H1 (cell line): ENCODE measurements at regions of chr11 and their contacts with region 1.

Region 1: DNA sequence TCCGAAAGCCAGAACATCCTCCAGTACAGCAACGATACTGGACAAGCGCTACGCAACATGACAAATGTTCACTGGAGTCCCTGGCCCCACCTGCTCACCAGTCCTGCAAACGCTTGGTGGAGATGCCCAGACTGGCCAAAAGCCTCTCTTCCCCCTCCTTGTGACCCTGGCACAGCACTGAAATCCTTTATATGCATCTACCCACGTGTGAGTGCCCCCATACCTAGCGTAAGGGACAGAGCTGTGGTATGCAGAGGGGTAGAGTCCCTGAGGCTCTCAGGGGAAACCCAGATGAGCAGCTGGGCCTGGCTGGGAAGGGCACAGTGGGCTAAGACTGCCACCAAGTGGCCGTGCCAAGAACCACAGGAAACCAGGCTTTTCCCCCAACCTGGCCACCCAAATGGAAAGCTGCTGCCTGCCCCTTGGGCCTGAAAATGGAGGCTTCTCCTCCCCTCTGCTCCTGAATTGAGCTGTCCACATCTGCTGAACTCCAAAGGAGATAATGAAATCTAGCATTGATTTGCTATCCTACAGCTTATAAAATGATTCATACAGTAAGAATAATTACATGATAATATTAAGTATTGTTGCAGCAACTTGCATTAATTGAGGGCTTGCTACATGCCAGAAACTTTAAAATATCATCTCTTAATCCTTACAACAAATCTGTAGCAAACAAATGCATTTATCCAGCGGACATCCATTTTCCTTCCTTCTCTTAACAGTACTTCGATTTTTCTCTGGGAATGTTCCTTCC is 24.8 kb upstream of the TTC12 start:
- DNase-seq: peak; percentile 36 to 86
- H3K4me3 ChIP-seq: no peak overlapping the region
- H3K27ac ChIP-seq: no peak overlapping the region
- H3K4me1 ChIP-seq: peaks cover 0 to 7% (median 0%) of the 10 kb centered on the region in 4 experiments; a peak in 1 of 7 replicates
- H3K27me3 ChIP-seq: no peaks in the 10 kb centered on the region; a peak in 1 of 7 replicates
- CTCF ChIP-seq: peak; percentile 91 to 98 (median 95)
- EP300 ChIP-seq: no peak
- POLR2A ChIP-seq: no peak
- RAD21 ChIP-seq: peak; percentile 99

Region 2: DNA sequence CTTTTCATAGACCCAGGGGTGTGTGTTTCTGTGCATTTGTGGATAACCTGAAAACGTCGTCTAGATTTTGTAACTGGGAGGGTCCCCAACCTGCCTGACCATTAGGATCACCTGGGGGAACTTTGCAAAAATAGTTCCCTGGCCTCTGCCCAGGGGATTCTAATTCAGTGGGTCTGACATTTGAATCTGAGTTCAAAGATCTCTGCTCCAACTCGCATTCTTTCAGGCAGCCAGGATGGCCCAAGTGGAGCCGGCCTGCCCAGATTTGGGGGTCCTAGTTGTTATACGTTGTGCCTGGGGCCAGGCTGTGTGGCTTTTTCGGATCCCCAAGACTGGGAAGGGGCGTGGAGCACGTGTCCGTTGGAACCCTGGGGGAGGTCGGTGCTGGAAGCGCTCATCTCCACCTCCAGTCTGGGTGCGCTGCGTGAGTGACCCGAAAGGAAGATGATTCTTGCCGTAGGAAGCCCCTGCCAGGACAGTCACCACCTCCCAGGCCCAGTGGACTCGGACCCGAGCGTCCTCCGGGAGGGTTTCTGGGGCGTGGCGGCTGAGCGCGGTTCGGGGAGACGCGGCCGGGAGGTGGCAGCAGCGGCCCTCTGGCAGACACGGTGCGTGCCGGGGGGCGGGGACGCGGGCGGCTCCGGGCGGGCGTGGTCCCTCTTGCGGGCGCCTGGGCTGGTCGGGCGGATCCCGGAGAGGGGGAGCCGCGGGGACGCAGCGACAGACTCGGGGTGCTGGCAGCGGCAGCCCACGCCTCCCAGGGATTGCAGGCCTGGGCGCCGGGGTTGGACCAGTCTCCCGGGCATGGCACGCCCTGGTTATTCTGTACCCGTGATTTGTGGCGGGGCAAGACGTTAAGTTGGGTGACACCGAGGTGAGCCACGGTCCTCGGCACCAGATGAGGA is 999.8 kb before region 1 on chr11:
- CTCF ChIA-PET with region 1: interaction called, 10 read pairs
- POLR2A ChIA-PET with region 1: no interaction called
- DNase-seq: peak in 1 of 2 experiments; percentile 94
- H3K4me3 ChIP-seq: peak overlapping the region; percentile 39 to 71 (median 60)
- H3K27ac ChIP-seq: no peak overlapping the region
- H3K4me1 ChIP-seq: peaks cover 0 to 5% (median 2%) of the 10 kb centered on the region in 4 experiments; a peak in 3 of 7 replicates
- H3K27me3 ChIP-seq: peaks cover 0 to 7% (median 1%) of the 10 kb centered on the region in 4 experiments; a peak in 4 of 7 replicates
- CTCF ChIP-seq: peak; percentile 76 to 93 (median 87)
- EP300 ChIP-seq: no peak
- POLR2A ChIP-seq: no peak
- RAD21 ChIP-seq: peak; percentile 79 to 91

Region 3: DNA sequence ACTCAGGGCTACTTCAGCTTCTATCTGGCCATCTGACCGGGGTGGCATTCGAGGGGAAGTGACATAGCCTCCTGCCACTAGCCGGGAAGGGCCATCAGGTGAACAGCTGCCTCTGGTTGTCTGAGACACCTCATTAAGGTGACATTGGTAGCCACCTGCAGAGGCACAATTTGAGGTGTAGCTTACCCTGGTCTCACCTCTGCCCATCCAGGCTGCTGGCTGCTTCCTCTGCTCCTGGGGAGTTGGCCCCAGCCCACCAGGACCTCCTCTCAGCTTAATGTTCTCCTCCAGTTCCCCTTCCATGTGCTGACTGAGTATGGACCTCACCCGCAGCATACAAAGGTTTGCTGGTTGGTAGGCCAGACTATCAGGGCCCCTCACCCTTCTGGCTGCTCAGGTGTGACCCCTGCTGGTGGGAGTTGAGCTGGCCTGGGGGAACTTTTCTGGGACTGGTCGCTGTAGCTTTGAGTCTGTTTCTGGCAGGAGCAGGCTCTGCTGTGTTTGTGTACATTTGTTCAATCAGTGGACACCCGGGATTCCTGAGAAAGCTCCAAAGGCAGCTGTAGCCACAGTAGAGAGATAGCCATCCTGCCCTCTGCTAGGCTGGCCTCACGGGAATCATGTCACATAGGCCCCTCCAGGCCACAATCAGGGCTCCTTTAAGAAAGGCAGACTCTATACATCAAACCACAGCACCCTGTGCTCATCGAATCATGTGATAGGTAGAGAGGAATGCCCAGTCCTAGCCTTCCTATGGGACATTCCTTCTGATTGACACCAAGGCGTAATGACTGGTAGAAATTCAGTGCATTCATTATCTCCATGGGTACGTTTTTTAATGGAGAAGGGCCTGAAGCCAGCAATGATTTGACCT is 733.9 kb before region 1 on chr11:
- CTCF ChIA-PET with region 1: interaction called, 12 read pairs
- POLR2A ChIA-PET with region 1: no interaction called
- DNase-seq: peak; percentile 17 to 94
- H3K4me3 ChIP-seq: no peak overlapping the region
- H3K27ac ChIP-seq: no peak overlapping the region
- H3K4me1 ChIP-seq: no peaks in the 10 kb centered on the region; a peak in 1 of 7 replicates
- H3K27me3 ChIP-seq: no peaks in the 10 kb centered on the region
- CTCF ChIP-seq: peak; percentile 85 to 94 (median 89)
- EP300 ChIP-seq: no peak
- POLR2A ChIP-seq: no peak
- RAD21 ChIP-seq: peak; percentile 80 to 82

Region 4: DNA sequence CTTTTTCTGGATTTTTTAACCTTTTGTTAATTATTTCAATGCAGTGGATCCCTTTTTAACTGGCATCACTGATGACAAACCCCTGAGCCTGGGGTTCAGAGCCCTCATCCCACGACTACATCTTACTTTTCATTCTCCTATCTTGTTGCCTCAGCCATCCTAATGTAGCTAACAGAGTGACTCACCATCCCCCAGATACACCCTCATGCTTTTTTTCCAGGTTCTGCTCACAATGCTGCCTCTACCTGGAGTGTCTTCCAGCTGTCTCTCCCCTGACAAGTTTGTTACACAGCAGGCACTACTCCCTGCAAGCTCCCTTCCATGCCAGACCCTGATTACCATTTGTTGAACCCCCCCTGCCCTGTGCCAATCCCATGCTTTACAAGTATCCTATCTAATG is 193.0 kb before region 1 on chr11:
- CTCF ChIA-PET with region 1: no interaction called
- POLR2A ChIA-PET with region 1: no interaction called
- DNase-seq: no peak
- H3K4me3 ChIP-seq: no peak overlapping the region
- H3K27ac ChIP-seq: no peak overlapping the region
- H3K4me1 ChIP-seq: peaks cover 0 to 2% (median 0%) of the 10 kb centered on the region in 4 experiments; a peak in 1 of 7 replicates
- H3K27me3 ChIP-seq: no peaks in the 10 kb centered on the region
- CTCF ChIP-seq: no peak
- EP300 ChIP-seq: no peak
- POLR2A ChIP-seq: no peak
- RAD21 ChIP-seq: no peak

Region 5: DNA sequence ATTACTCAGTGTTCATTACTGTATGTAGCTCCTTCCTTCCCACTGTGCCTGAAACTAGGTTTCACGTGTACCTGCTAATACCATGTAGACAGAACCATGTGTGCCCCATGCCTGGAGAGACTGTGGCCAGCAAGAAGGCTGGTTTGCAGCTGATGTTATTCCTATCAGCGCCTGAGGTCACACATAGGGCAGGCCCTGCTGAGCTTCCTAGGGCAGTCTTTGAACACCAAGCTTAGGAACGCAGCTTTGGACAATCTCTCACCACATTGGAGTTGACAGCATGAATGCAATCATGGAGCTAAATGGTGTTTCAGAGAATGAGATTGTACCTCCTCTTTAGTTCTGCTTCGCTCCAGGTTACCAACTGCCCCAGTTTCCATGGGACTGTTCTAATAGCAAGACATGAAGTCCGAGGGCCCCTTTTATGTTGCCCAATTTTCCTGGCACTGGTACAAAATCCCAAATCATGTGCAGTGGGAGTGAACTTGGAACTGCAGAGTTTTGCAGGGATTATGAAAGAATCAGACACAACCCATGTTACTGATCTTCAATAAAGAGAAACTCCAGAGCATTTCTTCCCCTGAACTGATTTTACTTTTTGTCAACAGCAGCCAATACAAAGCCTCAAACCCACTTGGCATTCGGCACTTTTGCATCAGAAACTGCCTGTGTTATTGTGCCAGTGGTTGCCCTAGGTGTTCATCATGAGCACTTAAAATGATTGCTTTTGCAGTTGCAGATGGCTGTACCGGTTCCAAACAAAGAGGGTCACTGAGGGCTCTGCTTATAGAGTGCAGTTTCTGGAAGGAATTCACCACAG is 129.4 kb before region 1 on chr11:
- CTCF ChIA-PET with region 1: interaction called, 11 read pairs
- POLR2A ChIA-PET with region 1: no interaction called
- DNase-seq: no peak
- H3K4me3 ChIP-seq: no peak overlapping the region
- H3K27ac ChIP-seq: no peak overlapping the region
- H3K4me1 ChIP-seq: 0 out of 7 replicates have a peak, but pooled peaks cover 0 to 1% (median 0%) of the 10 kb centered on the region in 4 experiments
- H3K27me3 ChIP-seq: no peaks in the 10 kb centered on the region; a peak in 2 of 7 replicates
- CTCF ChIP-seq: no peak
- EP300 ChIP-seq: no peak
- POLR2A ChIP-seq: no peak
- RAD21 ChIP-seq: no peak

Region 6: DNA sequence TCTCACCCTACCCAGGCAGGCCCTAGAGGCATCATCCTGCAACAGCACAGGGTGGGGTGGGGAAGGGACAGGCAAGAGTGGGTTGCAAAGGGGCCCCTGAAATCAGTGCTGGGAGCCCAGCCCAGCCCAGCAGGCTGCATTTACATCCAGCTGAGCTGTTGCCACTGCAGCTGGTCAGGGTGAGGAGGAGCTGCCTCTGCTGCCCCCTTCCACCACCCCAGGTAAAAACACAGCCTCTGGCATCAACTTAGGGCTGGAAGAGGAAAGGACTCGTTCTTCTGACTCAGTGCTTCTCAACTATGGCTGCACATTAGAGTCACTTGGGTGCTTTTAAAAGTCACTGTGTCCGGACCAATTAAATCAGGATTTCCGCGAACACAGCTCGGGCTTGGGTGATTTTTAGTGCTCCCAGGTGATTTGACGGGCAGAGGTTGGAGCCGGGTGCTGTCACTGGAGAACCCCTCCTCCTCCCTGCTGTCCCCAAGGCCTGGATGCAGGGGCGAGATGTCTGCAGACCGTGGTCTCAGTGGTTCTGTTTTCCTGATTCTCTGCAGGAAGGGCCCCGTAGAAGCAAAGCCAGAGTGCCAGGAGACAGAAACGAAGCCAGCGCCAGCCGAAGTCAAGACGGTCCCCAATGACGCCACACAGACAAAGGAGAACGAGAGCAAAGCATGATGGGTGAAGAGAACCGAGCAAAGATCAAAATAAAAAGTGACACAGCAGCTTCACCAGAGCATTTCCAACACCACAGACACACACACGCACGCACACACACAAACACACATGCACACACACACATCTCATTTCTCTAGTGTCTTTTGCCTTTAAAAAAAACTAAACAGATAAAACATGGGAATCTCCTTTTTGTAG is 14.7 kb before region 1 on chr11:
- CTCF ChIA-PET with region 1: interaction called, 15 read pairs
- POLR2A ChIA-PET with region 1: no interaction called
- DNase-seq: peak; percentile 21 to 56
- H3K4me3 ChIP-seq: no peak overlapping the region
- H3K27ac ChIP-seq: no peak overlapping the region
- H3K4me1 ChIP-seq: no peaks in the 10 kb centered on the region
- H3K27me3 ChIP-seq: no peaks in the 10 kb centered on the region
- CTCF ChIP-seq: peak; percentile 46 to 70 (median 70)
- EP300 ChIP-seq: no peak
- POLR2A ChIP-seq: no peak
- RAD21 ChIP-seq: peak; percentile 65 to 71

Region 7: GRCh38 chr11:113345978-113346377 is 56.4 kb after region 1 on chr11:
- CTCF ChIA-PET with region 1: no interaction called
- POLR2A ChIA-PET with region 1: no interaction called
- DNase-seq: no peak
- H3K4me3 ChIP-seq: no peak overlapping the region
- H3K27ac ChIP-seq: no peak overlapping the region
- H3K4me1 ChIP-seq: no peaks in the 10 kb centered on the region
- H3K27me3 ChIP-seq: no peaks in the 10 kb centered on the region
- CTCF ChIP-seq: no peak
- EP300 ChIP-seq: no peak
- POLR2A ChIP-seq: no peak
- RAD21 ChIP-seq: no peak